GM18951 (cell line): ENCODE measurements at regions of chr1 and their contacts with region 1.

Region 1: DNA sequence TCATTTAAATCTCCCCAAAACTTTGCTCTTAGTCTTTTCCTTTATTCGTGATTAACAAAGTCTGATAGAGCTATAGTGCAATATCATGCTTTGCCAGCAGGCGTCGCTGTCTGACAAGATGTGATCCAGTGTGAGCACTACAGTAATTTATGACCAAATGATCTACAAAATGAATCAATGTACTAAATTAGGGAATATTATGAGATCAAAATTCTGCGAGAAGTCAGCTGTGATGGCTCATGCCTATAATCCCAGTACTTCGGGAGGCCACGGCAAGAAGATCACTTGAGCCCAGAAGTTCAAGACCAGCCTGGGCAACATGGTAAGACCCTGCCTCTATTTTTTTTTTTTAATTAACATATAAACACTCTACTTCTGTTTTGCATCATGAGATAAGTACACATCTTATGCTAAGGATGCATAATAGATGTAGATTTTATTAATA is 3.6 kb upstream of the SPSB1 start:
- POLR2A ChIP-seq: no peak

Region 2: GRCh38 chr1:9225468-9225785 is 63.7 kb before region 1 on chr1:
- in situ Hi-C with region 1: no loop called
- POLR2A ChIP-seq: no peak

Region 3: DNA sequence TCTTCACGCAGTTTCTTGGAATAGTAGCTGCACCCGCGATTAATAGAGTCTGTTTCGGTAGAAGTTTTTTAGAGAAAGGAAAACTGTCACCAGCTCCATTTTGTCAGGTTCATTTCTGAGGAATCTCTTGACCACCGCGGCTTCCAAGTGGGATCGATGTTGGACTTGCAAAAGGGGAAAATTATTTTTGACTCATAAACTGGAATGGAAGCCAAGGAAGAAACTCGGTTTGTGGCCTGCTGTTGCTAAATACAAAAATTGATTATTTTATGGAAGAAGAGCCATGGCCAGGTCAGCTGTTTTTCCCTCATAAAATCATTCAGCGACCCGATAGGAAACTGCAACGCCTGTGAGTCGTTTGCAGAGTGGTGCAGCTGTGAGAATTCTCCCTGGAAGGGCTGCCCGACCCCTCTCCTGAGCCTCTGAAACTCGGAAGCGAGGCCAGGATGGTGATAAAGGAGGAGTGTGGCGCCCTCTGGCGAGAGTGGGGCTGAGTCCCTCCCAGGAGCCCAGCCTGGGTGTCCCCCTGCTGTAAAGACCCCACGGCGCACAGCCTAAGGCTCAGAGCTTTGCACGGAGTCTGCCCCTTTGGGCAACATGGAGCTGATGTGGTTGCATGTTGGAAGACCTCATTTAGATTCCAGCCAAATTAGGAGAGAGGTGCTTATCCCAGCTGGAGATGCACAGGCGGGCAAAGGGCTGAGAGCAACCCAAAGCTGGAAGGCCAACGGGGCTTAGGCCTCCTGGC is 166.5 kb after region 1 on chr1:
- in situ Hi-C with region 1: loop called (anchors 10 kb)
- POLR2A ChIP-seq: no peak

Region 4: GRCh38 chr1:9486466-9487140 is 197.5 kb after region 1 on chr1:
- in situ Hi-C with region 1: loop called (anchors 10 kb)
- POLR2A ChIP-seq: no peak

Region 5: GRCh38 chr1:9539165-9539828 is 250.2 kb after region 1 on chr1 and contains the start of gene SLC25A33:
- in situ Hi-C with region 1: no loop called
- POLR2A ChIP-seq: peak; percentile 96